CD8-positive, alpha-beta T cell (primary cell): ENCODE measurements at regions of chr2 and their contacts with region 1.

Region 1: DNA sequence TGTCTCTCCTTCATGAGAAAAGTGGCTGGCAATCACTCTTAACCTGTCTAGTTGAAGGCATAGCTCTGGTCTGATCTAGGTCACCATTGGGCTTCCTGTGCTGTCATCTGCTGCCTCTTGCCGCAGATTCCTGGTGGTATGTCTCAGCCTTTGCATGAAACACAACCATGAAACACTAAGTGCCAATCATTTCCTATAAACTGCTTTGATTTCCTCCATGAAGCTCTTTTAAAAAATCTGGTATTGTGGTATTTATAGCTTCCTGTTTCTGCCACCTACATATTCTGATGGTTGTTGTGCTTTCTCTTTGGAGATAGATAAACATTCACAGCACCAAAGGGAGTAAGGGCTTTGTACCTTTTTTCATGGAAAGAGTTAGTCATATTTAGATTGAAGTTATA is 120.0 kb upstream of the EPC2 start:
- DNase-seq: peak in 8 of 9 experiments; percentile 19 to 86 (median 60)
- ATAC-seq: peak; percentile 91
- H3K4me3 ChIP-seq: no peak overlapping the region
- H3K4me3 Mint-ChIP-seq: peak overlapping the region; percentile 53
- H3K27ac ChIP-seq: peak overlapping the region; percentile 25 to 26
- H3K27ac Mint-ChIP-seq: peak overlapping the region; percentile 84
- H3K4me1 ChIP-seq: peaks cover 90% of the 10 kb centered on the region
- H3K4me1 Mint-ChIP-seq: peaks cover 90% of the 10 kb centered on the region
- H3K27me3 ChIP-seq: no peaks in the 10 kb centered on the region
- H3K27me3 Mint-ChIP-seq: no peaks in the 10 kb centered on the region
- CTCF ChIP-seq: no peak

Region 2: DNA sequence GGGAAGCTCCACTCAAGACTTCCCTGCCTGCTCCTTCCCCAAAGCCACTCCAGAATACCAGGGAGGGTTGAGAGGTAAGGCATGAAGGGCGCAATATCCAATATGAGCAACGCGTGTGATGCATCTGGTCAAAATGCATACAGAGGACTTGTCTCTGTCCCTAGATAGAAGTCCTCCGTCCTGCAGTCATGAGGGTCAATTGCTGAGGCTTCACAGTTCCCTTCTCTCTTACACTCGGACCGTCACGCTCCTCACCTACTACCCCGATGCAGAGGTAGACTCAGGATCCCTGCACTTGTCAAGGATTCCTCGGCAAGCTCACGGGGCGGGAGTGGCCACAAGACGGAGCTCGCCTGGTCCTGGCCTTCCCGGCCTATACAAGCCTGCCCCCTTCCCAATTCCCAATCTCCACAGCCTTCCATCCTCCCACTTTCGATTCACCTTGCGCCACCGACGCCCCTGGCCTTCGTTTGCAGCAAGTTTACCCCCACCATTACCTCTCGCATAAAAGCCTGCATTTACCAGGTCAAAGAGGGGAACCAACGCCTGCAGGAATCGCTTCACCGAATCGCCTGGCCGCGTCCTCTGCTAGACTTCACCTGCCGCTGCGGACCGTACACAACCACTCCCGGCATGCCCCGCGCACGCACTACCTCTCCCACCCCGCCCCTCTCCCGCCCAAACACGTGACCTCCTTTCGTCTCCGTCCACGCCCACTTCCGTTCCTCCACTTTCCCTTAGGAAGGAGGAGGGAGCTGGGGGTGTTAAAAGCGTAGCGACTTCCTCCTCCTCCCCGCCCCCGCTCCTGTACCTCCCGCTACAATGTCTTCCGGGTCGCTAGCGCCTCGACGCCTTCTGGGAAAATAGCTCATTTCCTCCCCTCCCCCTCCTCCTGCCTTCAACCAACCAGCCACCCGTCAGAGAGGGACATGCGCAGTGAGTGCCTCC is 504.1 kb before region 1 on chr2 and contains the start of gene ORC4:
- CTCF ChIA-PET with region 1: no interaction called
- POLR2A ChIA-PET with region 1: interaction called, 9 read pairs
- intact Hi-C with region 1: loop called (anchors 2 to 5 kb)
- DNase-seq: peak; percentile 91 to 100 (median 96)
- ATAC-seq: peak; percentile 86
- H3K4me3 ChIP-seq: peak within 1 kb of the TSS; percentile 96 to 97
- H3K4me3 Mint-ChIP-seq: peak within 1 kb of the TSS; percentile 100
- H3K27ac ChIP-seq: peak within 1 kb of the TSS; percentile 85 to 94
- H3K27ac Mint-ChIP-seq: peak within 1 kb of the TSS; percentile 98
- H3K4me1 ChIP-seq: peaks cover 47% of the 10 kb centered on the region
- H3K4me1 Mint-ChIP-seq: peaks cover 73% of the 10 kb centered on the region
- H3K27me3 ChIP-seq: no peaks in the 10 kb centered on the region
- H3K27me3 Mint-ChIP-seq: no peaks in the 10 kb centered on the region
- CTCF ChIP-seq: no peak
- total RNA-seq, gene ORC4: 28.5 to 29.9 TPM

Region 3: DNA sequence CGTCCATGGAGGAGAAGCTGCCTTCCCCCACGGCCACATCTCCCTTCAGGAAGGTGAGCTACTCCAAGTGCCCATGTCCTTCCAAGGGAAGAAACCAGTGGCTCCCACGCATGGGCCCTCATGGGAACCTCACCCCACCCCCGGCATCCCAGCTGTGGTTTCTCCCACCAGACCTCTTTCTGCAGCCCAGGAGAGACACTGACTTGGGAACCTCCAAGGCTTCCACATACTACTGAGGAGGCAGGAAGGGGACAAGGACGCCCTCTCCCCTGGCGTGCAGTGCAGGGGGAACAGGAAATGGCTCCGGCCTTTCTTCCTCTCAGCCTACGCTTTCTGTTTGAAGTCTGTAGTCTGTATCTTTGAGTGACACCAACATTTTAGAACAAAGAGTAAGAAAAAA is 15.5 kb after region 1 on chr2:
- CTCF ChIA-PET with region 1: interaction called, 11 read pairs
- POLR2A ChIA-PET with region 1: interaction called, 14 read pairs
- intact Hi-C with region 1: loop called in 1 of 2 experiments (anchors 1 kb)
- DNase-seq: peak in 1 of 9 experiments; percentile 40
- ATAC-seq: peak; percentile 71
- H3K4me3 ChIP-seq: peak overlapping the region in 1 of 2 experiments; percentile 3
- H3K4me3 Mint-ChIP-seq: peak overlapping the region; percentile 55
- H3K27ac ChIP-seq: no peak overlapping the region
- H3K27ac Mint-ChIP-seq: peak overlapping the region; percentile 79
- H3K4me1 ChIP-seq: peaks cover 32% of the 10 kb centered on the region
- H3K4me1 Mint-ChIP-seq: peaks cover 42% of the 10 kb centered on the region
- H3K27me3 ChIP-seq: no peaks in the 10 kb centered on the region
- H3K27me3 Mint-ChIP-seq: no peaks in the 10 kb centered on the region
- CTCF ChIP-seq: no peak

Region 4: GRCh38 chr2:148557844-148558436 is 33.4 kb after region 1 on chr2:
- CTCF ChIA-PET with region 1: interaction called, 4 read pairs
- POLR2A ChIA-PET with region 1: interaction called, 14 read pairs
- intact Hi-C with region 1: loop called (anchors 1 to 5 kb)
- DNase-seq: no peak
- ATAC-seq: no peak
- H3K4me3 ChIP-seq: no peak overlapping the region
- H3K4me3 Mint-ChIP-seq: no peak overlapping the region
- H3K27ac ChIP-seq: no peak overlapping the region
- H3K27ac Mint-ChIP-seq: no peak overlapping the region
- H3K4me1 ChIP-seq: peaks cover 10% of the 10 kb centered on the region
- H3K4me1 Mint-ChIP-seq: no peaks in the 10 kb centered on the region
- H3K27me3 ChIP-seq: no peaks in the 10 kb centered on the region
- H3K27me3 Mint-ChIP-seq: no peaks in the 10 kb centered on the region
- CTCF ChIP-seq: no peak

Region 5: GRCh38 chr2:148644883-148645538 is 120.5 kb after region 1 on chr2:
- CTCF ChIA-PET with region 1: interaction called, 3 read pairs
- POLR2A ChIA-PET with region 1: interaction called, 11 read pairs
- intact Hi-C with region 1: loop called (anchors 1 to 5 kb)
- DNase-seq: peak; percentile 90 to 98 (median 94)
- ATAC-seq: peak; percentile 78
- H3K4me3 ChIP-seq: peak overlapping the region; percentile 85 to 87
- H3K4me3 Mint-ChIP-seq: peak overlapping the region; percentile 87
- H3K27ac ChIP-seq: peak overlapping the region; percentile 87 to 96
- H3K27ac Mint-ChIP-seq: peak overlapping the region; percentile 98
- H3K4me1 ChIP-seq: peaks cover 33% of the 10 kb centered on the region
- H3K4me1 Mint-ChIP-seq: peaks cover 36% of the 10 kb centered on the region
- H3K27me3 ChIP-seq: no peaks in the 10 kb centered on the region
- H3K27me3 Mint-ChIP-seq: no peaks in the 10 kb centered on the region
- CTCF ChIP-seq: no peak

Region 6: GRCh38 chr2:148874868-148875341 is 350.4 kb after region 1 on chr2 and contains the start of gene KIF5C:
- CTCF ChIA-PET with region 1: no interaction called
- POLR2A ChIA-PET with region 1: no interaction called
- intact Hi-C with region 1: loop called (anchors 5 to 10 kb)
- DNase-seq: peak; percentile 77 to 94 (median 87)
- ATAC-seq: peak; percentile 87
- H3K4me3 ChIP-seq: peak within 1 kb of the TSS; percentile 49 to 52
- H3K4me3 Mint-ChIP-seq: peak within 1 kb of the TSS; percentile 86
- H3K27ac ChIP-seq: no peak within 1 kb of the TSS
- H3K27ac Mint-ChIP-seq: peak within 1 kb of the TSS; percentile 41
- H3K4me1 ChIP-seq: peaks cover 12% of the 10 kb centered on the region
- H3K4me1 Mint-ChIP-seq: peaks cover 18% of the 10 kb centered on the region
- H3K27me3 ChIP-seq: peaks cover 0 to 5% of the 10 kb centered on the region in 2 experiments
- H3K27me3 Mint-ChIP-seq: peaks cover 16% of the 10 kb centered on the region
- CTCF ChIP-seq: no peak
- total RNA-seq, gene KIF5C: 6.4 to 6.5 TPM